Activated T-helper 1 cell treated with anti-CD3 and anti-CD28 coated beads, Interleukin-12 subunit alpha, Interleukin-12 subunit beta, Interleukin-2, Interleukin-4 antibody, amounts not matched to agents 30 ng/mL and 10 ng/mL and 1 ng/mL, durations not matched to agents 14 hours and 24 hours and 36 hours (primary cell): ENCODE measurements at regions of chr5 and their contacts with region 1.

Region 1: GRCh38 chr5:177113566-177114424 is 19.8 kb upstream of the NSD1 start:
- DNase-seq: peak; percentile 70
- H3K4me3 Mint-ChIP-seq: no peak overlapping the region
- H3K27ac Mint-ChIP-seq: peak overlapping the region; percentile 35
- H3K4me1 Mint-ChIP-seq: peaks cover 25% of the 10 kb centered on the region
- H3K27me3 Mint-ChIP-seq: no peaks in the 10 kb centered on the region

Region 2: DNA sequence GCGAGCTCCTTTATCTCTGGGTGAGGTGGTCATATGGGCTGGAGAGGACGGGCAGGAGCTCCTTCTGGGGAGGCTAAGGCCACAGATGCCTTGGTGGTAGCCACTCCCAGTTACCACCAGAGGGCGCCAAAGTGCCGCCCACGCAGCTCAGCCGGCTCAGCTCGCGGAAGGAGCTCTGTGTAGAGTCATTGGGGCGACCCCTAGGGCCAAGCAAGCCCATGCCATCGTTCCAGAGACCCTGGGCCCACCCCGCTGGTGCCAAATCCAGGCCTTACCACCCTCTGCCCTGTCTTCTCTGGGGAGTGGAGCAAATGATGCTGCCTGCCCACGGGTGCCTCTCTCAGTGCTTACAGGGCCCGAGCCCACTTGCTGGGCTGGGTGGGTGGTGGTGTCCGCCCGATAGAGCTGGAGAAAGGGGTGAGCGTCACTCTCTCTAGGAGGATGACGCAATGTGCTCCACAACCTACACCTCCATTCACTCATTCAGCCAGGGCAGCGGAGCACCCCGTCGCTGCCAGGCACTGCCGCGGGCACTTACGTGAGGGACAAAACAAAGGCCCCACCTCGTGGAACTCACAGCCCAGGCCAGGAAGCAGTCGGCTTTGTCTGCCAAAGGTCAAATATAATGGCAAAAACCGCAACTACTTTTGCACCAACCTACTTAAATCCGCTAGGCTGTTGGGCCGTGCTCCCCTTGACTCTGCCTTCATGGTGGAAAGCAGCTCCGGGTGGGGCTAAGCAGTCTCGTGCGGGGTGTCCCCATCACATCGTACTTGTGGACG is 452.7 kb before region 1 on chr5:
- intact Hi-C with region 1: loop called (anchors 1 kb)
- DNase-seq: peak; percentile 67
- H3K4me3 Mint-ChIP-seq: no peak overlapping the region
- H3K27ac Mint-ChIP-seq: no peak overlapping the region
- H3K4me1 Mint-ChIP-seq: peaks cover 32% of the 10 kb centered on the region
- H3K27me3 Mint-ChIP-seq: peaks cover 12% of the 10 kb centered on the region

Region 3: GRCh38 chr5:177086924-177087706 is 26.7 kb before region 1 on chr5:
- intact Hi-C with region 1: loop called (anchors 1 kb)
- DNase-seq: peak; percentile 48
- H3K4me3 Mint-ChIP-seq: no peak overlapping the region
- H3K27ac Mint-ChIP-seq: no peak overlapping the region
- H3K4me1 Mint-ChIP-seq: peaks cover 7% of the 10 kb centered on the region
- H3K27me3 Mint-ChIP-seq: peaks cover 45% of the 10 kb centered on the region

Region 4: DNA sequence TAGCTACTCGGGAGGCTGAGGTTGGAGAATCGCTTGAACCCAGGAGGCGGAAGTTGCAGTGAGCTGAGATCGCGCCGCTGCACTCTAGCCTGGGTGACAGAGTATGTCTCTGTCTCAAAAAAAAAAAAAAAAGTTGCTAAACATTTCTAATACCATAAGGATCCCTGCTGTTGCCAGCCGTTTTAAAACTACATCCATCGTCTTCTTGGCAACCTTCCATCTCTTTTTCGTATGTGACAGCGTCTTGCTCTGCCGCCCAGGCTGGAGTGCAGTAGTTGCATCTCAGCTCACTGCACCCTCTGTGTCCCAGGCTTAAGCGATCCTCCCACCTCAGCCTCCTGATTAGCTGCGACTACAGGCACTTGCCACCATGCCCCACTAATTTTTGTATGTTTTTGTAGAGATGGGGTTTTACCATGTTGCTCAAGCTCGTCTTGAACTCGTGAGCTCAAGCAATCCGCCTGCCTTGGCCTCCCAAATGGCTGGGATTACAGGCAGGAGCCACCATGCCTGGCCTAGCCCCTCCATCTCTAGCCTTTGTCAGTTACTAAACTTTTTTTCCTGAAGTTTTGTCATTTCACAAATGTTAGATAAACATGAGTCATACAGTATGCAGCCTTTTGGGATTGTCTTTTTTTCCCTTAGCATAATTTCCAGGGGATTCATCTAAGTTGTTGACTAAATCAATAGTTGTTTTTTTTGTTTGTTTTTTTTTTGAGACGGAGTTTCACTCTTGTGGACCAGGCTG is 33.3 kb after region 1 on chr5:
- intact Hi-C with region 1: loop called (anchors 5 kb)
- DNase-seq: no peak
- H3K4me3 Mint-ChIP-seq: no peak overlapping the region
- H3K27ac Mint-ChIP-seq: no peak overlapping the region
- H3K4me1 Mint-ChIP-seq: peaks cover 9% of the 10 kb centered on the region
- H3K27me3 Mint-ChIP-seq: no peaks in the 10 kb centered on the region

Region 5: GRCh38 chr5:177303121-177303924 is 189.5 kb after region 1 on chr5 and contains the starts of genes PRELID1 and RAB24:
- intact Hi-C with region 1: loop called (anchors 1 kb)
- DNase-seq: peak; percentile 86
- H3K4me3 Mint-ChIP-seq: peak within 1 kb of the TSS; percentile 93
- H3K27ac Mint-ChIP-seq: peak within 1 kb of the TSS; percentile 84
- H3K4me1 Mint-ChIP-seq: peaks cover 75% of the 10 kb centered on the region
- H3K27me3 Mint-ChIP-seq: no peaks in the 10 kb centered on the region
- total RNA-seq, gene PRELID1: 239 and 250 TPM in 2 replicates
- total RNA-seq, gene RAB24: 19.7 and 22.4 TPM in 2 replicates